ENCODE measurements at regions of chr9 and their contacts with region 1.

Region 1: DNA sequence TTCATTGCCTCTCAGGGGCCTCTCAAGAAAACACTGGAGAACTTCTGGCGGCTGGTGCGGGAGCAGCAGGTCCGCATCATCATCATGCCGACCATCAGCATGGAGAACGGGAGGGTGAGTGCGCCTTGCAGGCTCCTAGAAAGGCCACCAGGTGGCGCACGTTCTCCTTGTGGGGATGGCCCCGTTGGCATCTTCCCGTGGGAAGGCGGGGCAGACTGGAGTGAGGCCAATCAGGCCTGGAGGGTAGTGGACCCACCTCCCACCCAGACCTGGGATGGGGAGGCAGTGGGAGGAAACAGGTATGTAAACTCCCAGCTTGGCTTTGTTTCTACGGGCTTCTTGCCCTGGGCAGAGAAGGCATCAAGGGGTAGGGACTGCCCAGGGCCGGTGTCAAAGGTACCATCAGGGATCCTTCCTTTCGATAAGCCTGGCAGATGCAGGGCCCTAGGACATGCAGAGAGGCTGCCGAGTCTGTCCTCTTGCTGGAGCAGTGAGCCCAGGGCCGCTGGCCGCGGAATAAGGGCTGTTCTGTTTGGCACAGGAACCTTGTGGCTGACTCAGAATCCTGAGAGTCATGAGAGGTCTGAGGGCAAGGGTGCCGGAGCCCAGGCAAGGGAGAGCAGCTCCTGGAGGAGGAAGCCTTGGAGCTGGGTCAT is 18.9 kb upstream of the SPTLC1 start:
- DNase-seq: peak; percentile 77
- ATAC-seq: peak; percentile 80
- H3K4me3 ChIP-seq: no peak overlapping the region
- H3K27ac ChIP-seq: peak overlapping the region; percentile 28
- H3K4me1 ChIP-seq: peaks cover 15% of the 10 kb centered on the region
- H3K27me3 ChIP-seq: no peaks in the 10 kb centered on the region
- CTCF ChIP-seq: peak; percentile 93
- POLR2A ChIP-seq: no peak
- RAD21 ChIP-seq: peak; percentile 85

Region 2: GRCh38 chr9:92293452-92294296 is 159.6 kb after region 1 on chr9 and contains the start of gene IARS1:
- CTCF ChIA-PET with region 1: no interaction called
- POLR2A ChIA-PET with region 1: no interaction called
- dilution Hi-C with region 1: no loop called
- in situ Hi-C with region 1: loop called (anchors 10 kb)
- intact Hi-C with region 1: loop called (anchors 2 kb)
- DNase-seq: peak; percentile 98
- ATAC-seq: peak; percentile 91
- H3K4me3 ChIP-seq: peak within 1 kb of the TSS; percentile 61
- H3K27ac ChIP-seq: peak within 1 kb of the TSS; percentile 85
- H3K4me1 ChIP-seq: peaks cover 6% of the 10 kb centered on the region
- H3K27me3 ChIP-seq: no peaks in the 10 kb centered on the region
- CTCF ChIP-seq: peak; percentile 44
- POLR2A ChIP-seq: peak; percentile 83
- RAD21 ChIP-seq: no peak
- total RNA-seq, gene IARS1: 383 and 414 TPM in 2 replicates

Region 3: GRCh38 chr9:92564504-92564903 is 430.4 kb after region 1 on chr9:
- CTCF ChIA-PET with region 1: no interaction called
- POLR2A ChIA-PET with region 1: no interaction called
- dilution Hi-C with region 1: no loop called
- in situ Hi-C with region 1: no loop called
- intact Hi-C with region 1: no loop called
- DNase-seq: peak; percentile 73
- ATAC-seq: peak; percentile 50
- H3K4me3 ChIP-seq: no peak overlapping the region
- H3K27ac ChIP-seq: no peak overlapping the region
- H3K4me1 ChIP-seq: peaks cover 14% of the 10 kb centered on the region
- H3K27me3 ChIP-seq: no peaks in the 10 kb centered on the region; the same call in 1 of the 2 replicates
- CTCF ChIP-seq: no peak
- POLR2A ChIP-seq: no peak
- RAD21 ChIP-seq: no peak

Measured in IMR-90 (cell line).